Activated CD4-positive, alpha-beta memory T cell treated with anti-CD3 and anti-CD28 coated beads, Interleukin-2, amount 10 ng/mL, durations not matched to agents 7 days and 5 days (primary cell): ENCODE measurements at regions of chr1 and their contacts with region 1.

Region 1: GRCh38 chr1:159197561-159198557 is 6.8 kb upstream of the ACKR1 start:
- DNase-seq: peak; percentile 50
- H3K4me3 Mint-ChIP-seq: no peak overlapping the region
- H3K27ac Mint-ChIP-seq: no peak overlapping the region
- H3K4me1 Mint-ChIP-seq: no peaks in the 10 kb centered on the region
- H3K27me3 Mint-ChIP-seq: peaks cover 46% of the 10 kb centered on the region

Region 2: GRCh38 chr1:158873141-158873540 is 324.7 kb before region 1 on chr1:
- CTCF ChIA-PET with region 1: no interaction called
- POLR2A ChIA-PET with region 1: no interaction called
- DNase-seq: no peak
- H3K4me3 Mint-ChIP-seq: no peak overlapping the region
- H3K27ac Mint-ChIP-seq: no peak overlapping the region
- H3K4me1 Mint-ChIP-seq: no peaks in the 10 kb centered on the region
- H3K27me3 Mint-ChIP-seq: no peaks in the 10 kb centered on the region

Region 3: DNA sequence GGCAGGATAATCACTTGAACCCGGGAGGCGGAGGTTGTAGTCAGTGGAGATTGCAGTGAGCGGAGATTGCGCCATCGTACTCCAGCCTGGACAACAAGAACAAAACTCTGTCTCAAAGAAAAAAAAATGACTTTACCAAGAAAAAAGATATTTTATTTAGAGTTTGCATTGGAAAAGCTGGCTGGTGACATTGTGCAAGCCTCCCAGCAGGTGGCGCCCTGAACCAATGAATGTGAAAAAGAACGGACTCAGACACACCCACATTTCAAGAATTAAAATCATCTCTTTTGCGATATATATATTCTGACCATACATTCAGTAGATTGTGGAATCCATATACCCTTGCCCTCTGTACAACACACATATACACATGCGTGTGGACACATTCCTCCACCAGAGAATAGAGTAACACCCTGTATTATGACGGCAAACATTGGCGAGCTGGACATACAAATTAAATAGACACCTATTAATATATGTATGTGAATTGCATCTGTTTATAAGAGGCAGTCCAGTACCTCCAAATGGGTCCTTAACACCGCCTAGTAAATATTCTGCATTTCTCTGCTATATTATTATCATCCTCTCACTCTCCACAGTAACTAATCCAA is 65.5 kb before region 1 on chr1:
- CTCF ChIA-PET with region 1: interaction called, 31 read pairs
- POLR2A ChIA-PET with region 1: no interaction called
- DNase-seq: peak; percentile 70
- H3K4me3 Mint-ChIP-seq: no peak overlapping the region
- H3K27ac Mint-ChIP-seq: no peak overlapping the region
- H3K4me1 Mint-ChIP-seq: no peaks in the 10 kb centered on the region
- H3K27me3 Mint-ChIP-seq: peaks cover 5% of the 10 kb centered on the region

Region 4: GRCh38 chr1:159161001-159161718 is 36.7 kb before region 1 on chr1:
- CTCF ChIA-PET with region 1: interaction called, 10 read pairs
- POLR2A ChIA-PET with region 1: no interaction called
- DNase-seq: peak; percentile 57
- H3K4me3 Mint-ChIP-seq: no peak overlapping the region
- H3K27ac Mint-ChIP-seq: no peak overlapping the region
- H3K4me1 Mint-ChIP-seq: no peaks in the 10 kb centered on the region
- H3K27me3 Mint-ChIP-seq: peaks cover 52% of the 10 kb centered on the region